ENCODE measurements at regions of chr7 and their contacts with region 1.

Region 1: DNA sequence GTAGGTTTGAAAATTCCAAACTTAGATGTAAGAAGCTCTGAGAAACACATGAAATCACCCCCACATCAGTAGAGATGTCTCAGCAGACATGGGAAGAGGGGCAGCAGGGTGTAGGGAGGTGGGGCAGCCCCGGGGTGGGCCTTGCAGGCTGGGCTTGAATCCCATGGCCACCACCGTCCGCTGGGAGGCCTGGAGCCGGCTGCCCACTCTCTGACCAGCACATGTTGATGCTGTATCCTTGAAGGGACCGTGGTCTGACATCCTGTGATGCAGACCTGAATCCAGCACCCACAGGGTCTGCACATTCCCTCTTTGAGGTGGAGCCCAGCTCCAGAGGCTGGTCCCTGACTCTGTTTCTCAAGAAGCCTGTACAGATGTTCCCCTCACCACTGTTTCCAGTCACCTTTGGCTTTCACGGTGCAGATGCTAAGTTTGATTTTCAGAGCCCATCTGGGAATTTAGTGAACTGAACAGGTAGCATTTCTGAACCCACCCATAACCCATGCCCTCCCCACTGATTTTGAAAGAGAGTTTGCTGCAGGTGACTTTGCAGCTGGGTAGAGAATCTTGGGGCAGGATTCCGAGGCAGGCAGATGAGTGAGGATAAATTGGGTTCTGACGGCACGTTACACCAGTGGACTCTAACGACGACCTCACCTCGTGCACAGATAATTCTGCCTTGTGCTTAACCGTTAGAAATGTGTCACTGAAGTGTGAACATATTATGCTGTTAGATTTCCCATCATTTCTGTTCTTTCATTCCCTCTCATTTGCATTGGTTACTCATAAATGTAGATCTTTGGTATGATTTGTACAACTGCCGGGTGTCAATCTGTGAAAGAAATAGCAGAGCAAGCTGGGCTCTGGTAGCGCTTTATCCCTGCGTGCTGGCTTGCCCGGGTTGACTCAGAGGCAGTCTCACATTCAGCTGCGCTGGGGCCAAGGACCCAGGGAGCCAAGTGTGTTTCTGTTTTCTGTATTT is 45.7 kb downstream of the IKZF1 start:
- DNase-seq: peak; percentile 92
- H3K4me3 Mint-ChIP-seq: peak overlapping the region; percentile 76
- H3K27ac Mint-ChIP-seq: peak overlapping the region; percentile 95
- H3K4me1 Mint-ChIP-seq: peaks cover 95% of the 10 kb centered on the region
- H3K27me3 Mint-ChIP-seq: no peaks in the 10 kb centered on the region

Region 2: GRCh38 chr7:49980465-49980864 is 369.8 kb before region 1 on chr7:
- intact Hi-C with region 1: no loop called
- DNase-seq: peak; percentile 67
- H3K4me3 Mint-ChIP-seq: no peak overlapping the region
- H3K27ac Mint-ChIP-seq: no peak overlapping the region
- H3K4me1 Mint-ChIP-seq: no peaks in the 10 kb centered on the region
- H3K27me3 Mint-ChIP-seq: no peaks in the 10 kb centered on the region

Region 3: GRCh38 chr7:50293509-50294179 is 56.6 kb before region 1 on chr7:
- intact Hi-C with region 1: no loop called
- DNase-seq: peak; percentile 45
- H3K4me3 Mint-ChIP-seq: no peak overlapping the region
- H3K27ac Mint-ChIP-seq: no peak overlapping the region
- H3K4me1 Mint-ChIP-seq: peaks cover 25% of the 10 kb centered on the region
- H3K27me3 Mint-ChIP-seq: peaks cover 4% of the 10 kb centered on the region

Region 4: DNA sequence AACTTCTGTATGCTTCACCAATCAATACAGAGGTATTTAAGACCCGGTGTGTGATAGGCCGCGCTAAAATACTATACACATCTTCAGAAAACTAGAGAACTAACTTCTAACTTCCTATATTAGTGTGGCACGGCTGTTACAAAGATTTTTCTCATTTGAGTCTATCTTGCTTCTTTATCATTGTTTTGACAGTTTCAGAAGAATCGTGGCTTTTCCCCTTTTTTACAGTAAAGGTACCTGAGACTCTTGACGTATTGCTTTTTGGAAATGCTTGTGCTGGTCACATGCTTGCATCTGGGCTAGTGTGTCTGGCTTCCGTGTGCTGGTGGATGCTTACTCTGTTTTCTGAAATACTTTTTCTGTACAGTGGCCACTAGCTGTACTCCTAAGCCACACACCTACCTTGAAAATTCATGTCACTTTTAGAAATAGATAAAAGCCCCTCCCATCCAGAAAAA is 33.0 kb before region 1 on chr7:
- intact Hi-C with region 1: loop called (anchors 1 kb)
- DNase-seq: peak; percentile 87
- H3K4me3 Mint-ChIP-seq: peak overlapping the region; percentile 79
- H3K27ac Mint-ChIP-seq: peak overlapping the region; percentile 88
- H3K4me1 Mint-ChIP-seq: peaks cover 87% of the 10 kb centered on the region
- H3K27me3 Mint-ChIP-seq: no peaks in the 10 kb centered on the region

Region 5: GRCh38 chr7:50335795-50336754 is 14.2 kb before region 1 on chr7:
- intact Hi-C with region 1: loop called (anchors 1 kb)
- DNase-seq: peak; percentile 92
- H3K4me3 Mint-ChIP-seq: no peak overlapping the region
- H3K27ac Mint-ChIP-seq: no peak overlapping the region
- H3K4me1 Mint-ChIP-seq: peaks cover 63% of the 10 kb centered on the region
- H3K27me3 Mint-ChIP-seq: no peaks in the 10 kb centered on the region

Region 6: GRCh38 chr7:50359995-50360925 is 10.0 kb after region 1 on chr7:
- intact Hi-C with region 1: loop called (anchors 1 kb)
- DNase-seq: peak; percentile 94
- H3K4me3 Mint-ChIP-seq: peak overlapping the region; percentile 81
- H3K27ac Mint-ChIP-seq: peak overlapping the region; percentile 99
- H3K4me1 Mint-ChIP-seq: peaks cover 92% of the 10 kb centered on the region
- H3K27me3 Mint-ChIP-seq: no peaks in the 10 kb centered on the region

Region 7: GRCh38 chr7:50369143-50370026 is 19.1 kb after region 1 on chr7:
- intact Hi-C with region 1: loop called (anchors 1 kb)
- DNase-seq: peak; percentile 87
- H3K4me3 Mint-ChIP-seq: peak overlapping the region; percentile 55
- H3K27ac Mint-ChIP-seq: peak overlapping the region; percentile 45
- H3K4me1 Mint-ChIP-seq: peaks cover 85% of the 10 kb centered on the region
- H3K27me3 Mint-ChIP-seq: no peaks in the 10 kb centered on the region